ENCODE measurements at regions of chr4 and their contacts with region 1.

Region 1: GRCh38 chr4:41692717-41693345 is 55.7 kb downstream of the PHOX2B start:
- DNase-seq: peak; percentile 35 to 80 (median 49)
- H3K4me3 ChIP-seq: no peak overlapping the region
- H3K27ac ChIP-seq: no peak overlapping the region
- H3K4me1 ChIP-seq: no peaks in the 10 kb centered on the region
- H3K27me3 ChIP-seq: no peaks in the 10 kb centered on the region
- CTCF ChIP-seq: peak; percentile 66 to 86 (median 80)
- POLR2A ChIP-seq: no peak

Region 2: DNA sequence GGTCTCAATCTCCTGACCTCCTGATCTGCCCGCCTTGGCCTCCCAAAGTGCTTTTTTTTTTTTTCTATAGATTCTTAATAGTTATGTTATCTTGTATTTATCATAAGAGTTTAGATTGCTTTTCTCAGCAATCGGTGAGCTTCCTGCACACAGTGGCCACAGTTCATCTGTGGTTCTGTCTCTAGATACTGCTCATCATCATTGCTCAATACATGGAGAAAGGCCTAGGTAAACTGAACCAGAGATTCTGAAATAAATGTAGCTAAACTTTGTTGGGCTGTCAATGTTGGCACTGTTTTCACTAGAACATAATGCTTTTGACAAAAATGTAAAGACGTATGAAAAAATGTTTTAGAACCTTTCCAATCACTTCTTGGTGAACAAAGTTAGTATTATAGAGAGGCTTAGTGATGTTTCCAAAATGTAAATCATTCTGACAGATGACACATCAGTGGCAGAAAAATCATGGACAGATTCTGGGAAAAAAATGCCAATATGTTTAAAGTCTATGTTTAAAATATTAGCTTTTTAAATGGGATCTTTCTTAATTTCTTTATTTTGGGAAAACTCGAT is 204.9 kb before region 1 on chr4:
- intact Hi-C with region 1: no loop called
- DNase-seq: no peak
- H3K4me3 ChIP-seq: no peak overlapping the region
- H3K27ac ChIP-seq: no peak overlapping the region
- H3K4me1 ChIP-seq: peaks cover 0 to 4% of the 10 kb centered on the region in 2 donors
- H3K27me3 ChIP-seq: no peaks in the 10 kb centered on the region
- CTCF ChIP-seq: no peak
- POLR2A ChIP-seq: no peak

Region 3: GRCh38 chr4:41559940-41560511 is 132.8 kb before region 1 on chr4:
- intact Hi-C with region 1: no loop called
- DNase-seq: no peak
- H3K4me3 ChIP-seq: no peak overlapping the region
- H3K27ac ChIP-seq: no peak overlapping the region
- H3K4me1 ChIP-seq: peaks cover 0 to 42% of the 10 kb centered on the region in 2 donors
- H3K27me3 ChIP-seq: no peaks in the 10 kb centered on the region
- CTCF ChIP-seq: no peak
- POLR2A ChIP-seq: no peak

Region 4: DNA sequence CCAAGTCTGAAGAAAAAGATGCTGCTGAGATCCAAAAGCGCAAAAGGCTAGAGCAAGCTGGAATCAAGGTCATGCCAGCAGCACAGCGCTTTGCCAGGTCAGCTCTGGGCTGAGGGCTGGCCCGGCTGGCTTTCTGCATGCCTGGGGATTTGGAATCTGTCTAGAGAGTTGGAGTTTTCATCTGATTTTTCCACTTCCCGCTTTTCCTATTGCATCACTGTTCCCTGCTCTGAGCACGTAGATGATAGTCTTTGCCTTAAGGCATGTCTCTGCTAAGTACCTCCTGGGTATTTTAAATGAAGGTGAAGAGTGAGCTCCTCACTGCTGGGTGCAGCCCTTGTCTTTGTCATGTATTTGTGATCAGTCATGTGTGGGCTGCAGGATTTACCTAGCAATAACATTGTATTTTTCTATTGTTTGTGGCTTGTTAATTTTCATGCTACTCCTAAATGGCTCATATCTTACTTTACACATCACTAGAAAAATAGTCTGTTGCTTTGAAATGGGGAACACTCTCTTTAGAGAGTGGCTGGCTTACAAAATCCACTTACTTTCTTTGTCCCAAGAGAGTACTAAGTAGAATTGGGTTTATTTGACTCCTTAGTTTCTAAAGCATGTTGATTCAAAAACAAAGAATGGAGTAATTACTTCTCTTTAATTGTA is 72.1 kb before region 1 on chr4:
- intact Hi-C with region 1: no loop called
- DNase-seq: peak; percentile 42 to 65 (median 55)
- H3K4me3 ChIP-seq: no peak overlapping the region
- H3K27ac ChIP-seq: peak overlapping the region in 1 of 5 donors; percentile 10
- H3K4me1 ChIP-seq: peaks cover 0 to 10% of the 10 kb centered on the region in 2 donors
- H3K27me3 ChIP-seq: no peaks in the 10 kb centered on the region
- CTCF ChIP-seq: no peak
- POLR2A ChIP-seq: no peak

Region 5: DNA sequence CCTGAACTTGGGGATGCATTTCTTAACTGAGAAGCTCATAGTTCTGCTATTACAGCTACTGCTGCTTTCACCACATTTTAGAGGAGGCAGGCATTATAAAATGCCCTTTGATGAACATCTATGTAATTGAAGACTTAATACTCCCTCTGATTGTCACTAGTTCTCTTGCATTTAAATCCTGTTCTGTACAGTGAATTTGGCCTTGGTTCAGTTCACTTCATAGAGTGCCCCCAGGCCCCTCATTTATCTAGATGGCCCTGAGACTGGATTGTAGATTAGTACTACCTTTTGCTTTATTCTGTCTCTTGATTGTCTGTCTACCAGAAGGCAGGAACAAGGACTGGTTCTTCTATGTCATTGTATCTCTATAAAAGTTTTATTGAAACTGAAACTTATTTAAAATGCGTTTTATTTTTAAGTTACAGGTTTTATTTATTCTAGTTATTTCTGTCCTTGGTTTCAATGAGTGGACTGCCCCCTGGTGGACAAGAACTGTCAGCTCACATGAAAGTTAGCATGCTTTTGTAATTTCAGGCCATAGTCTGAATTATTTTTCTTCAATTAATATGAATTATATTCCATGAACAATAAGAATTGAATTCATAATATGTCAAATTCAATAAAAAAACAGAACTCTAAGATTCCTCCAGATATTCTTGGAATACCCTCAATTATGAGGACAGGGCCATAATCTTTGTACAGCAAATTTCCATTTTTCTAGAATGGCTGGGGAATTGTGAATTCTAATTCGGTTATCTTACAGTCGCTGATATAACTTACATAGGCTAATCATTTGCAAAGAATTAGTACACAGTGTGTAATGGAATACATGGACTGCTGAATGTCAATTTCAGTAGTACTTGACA is 195.2 kb after region 1 on chr4:
- intact Hi-C with region 1: loop called (anchors 5 kb)
- DNase-seq: peak in 6 of 7 donors; percentile 29 to 89 (median 66)
- H3K4me3 ChIP-seq: no peak overlapping the region
- H3K27ac ChIP-seq: no peak overlapping the region
- H3K4me1 ChIP-seq: peaks cover 0 to 8% of the 10 kb centered on the region in 2 donors
- H3K27me3 ChIP-seq: no peaks in the 10 kb centered on the region
- CTCF ChIP-seq: peak; percentile 77 to 98 (median 88)
- POLR2A ChIP-seq: no peak